Activated CD4-positive, alpha-beta memory T cell treated with anti-CD3 and anti-CD28 coated beads for 36 hours (primary cell): ENCODE measurements at regions of chr1 and their contacts with region 1.

Region 1: DNA sequence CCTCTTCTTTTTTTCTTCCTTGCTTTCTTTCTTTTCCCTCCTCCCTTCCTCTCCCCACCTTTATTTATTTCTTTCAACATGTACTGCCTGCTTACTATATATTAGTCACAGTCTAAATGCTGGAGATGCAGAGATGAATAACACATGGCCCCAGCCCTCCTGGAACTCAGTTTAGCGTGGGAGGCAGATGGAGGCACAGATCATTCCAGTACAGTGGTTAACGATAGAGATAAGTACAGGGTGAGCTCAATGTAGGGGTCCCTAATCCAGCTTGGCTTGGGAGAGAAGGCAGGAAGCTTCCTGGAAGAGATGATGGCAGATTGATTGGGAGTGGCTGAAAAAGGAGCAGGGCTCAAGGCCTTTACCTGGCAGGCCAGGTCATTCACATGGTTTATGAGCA is 55.6 kb upstream of the PPP2R5A start:
- DNase-seq: no peak
- H3K4me3 Mint-ChIP-seq: no peak overlapping the region
- H3K27ac Mint-ChIP-seq: no peak overlapping the region
- H3K4me1 Mint-ChIP-seq: peaks cover 30% of the 10 kb centered on the region
- H3K27me3 Mint-ChIP-seq: no peaks in the 10 kb centered on the region

Region 2: DNA sequence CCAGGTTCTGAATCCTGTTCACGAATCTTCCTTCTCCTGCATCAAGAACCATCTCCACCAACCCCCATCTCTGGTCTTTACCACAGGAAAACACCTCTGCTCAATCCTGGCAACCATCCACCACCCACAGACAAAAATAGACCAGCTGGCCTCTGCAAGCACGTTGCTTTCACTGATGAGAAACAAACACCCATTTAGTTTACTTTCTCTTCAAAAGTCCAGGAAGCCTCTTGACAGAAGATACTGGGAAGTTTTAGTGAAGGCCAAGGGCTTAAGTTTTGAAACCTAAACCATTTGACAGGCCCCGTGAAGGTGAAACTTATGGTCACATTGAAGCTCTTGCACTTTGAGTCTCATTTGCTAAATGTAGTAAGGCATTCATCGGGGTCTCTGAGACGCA is 67.0 kb before region 1 on chr1:
- CTCF ChIA-PET with region 1: interaction called, 3 read pairs
- POLR2A ChIA-PET with region 1: no interaction called
- intact Hi-C with region 1: loop called (anchors 5 kb)
- DNase-seq: peak; percentile 52
- H3K4me3 Mint-ChIP-seq: no peak overlapping the region
- H3K27ac Mint-ChIP-seq: peak overlapping the region; percentile 30
- H3K4me1 Mint-ChIP-seq: peaks cover 29% of the 10 kb centered on the region
- H3K27me3 Mint-ChIP-seq: no peaks in the 10 kb centered on the region

Region 3: DNA sequence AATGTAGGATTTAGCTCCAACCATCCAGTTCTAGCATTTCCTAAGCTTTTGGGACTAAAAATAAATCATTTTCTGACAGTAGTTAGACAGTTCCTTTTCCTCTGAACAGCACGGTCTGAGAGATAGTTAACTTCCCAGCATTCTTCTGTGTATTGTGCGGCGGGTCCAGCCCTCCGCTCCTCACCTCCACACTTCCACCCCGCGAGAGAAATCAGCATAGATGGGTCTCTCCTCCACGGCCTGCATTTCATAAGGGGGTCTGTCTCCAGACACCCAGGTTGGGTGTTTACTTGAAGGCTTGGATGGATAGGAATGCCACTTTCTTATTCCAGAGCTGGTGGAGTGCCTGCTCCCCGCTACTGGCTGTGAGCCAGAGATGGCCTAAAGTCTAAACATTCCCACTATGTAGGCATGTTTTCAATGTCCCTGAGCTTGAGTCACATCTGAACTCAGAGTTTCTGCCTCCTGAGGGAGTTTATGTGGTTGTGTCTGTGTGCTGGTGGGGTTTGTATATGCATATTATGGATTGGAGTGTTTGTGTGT is 17.6 kb after region 1 on chr1:
- CTCF ChIA-PET with region 1: no interaction called
- POLR2A ChIA-PET with region 1: no interaction called
- intact Hi-C with region 1: no loop called
- DNase-seq: no peak
- H3K4me3 Mint-ChIP-seq: no peak overlapping the region
- H3K27ac Mint-ChIP-seq: no peak overlapping the region
- H3K4me1 Mint-ChIP-seq: peaks cover 9% of the 10 kb centered on the region
- H3K27me3 Mint-ChIP-seq: no peaks in the 10 kb centered on the region

Region 4: GRCh38 chr1:212421165-212421564 is 191.5 kb after region 1 on chr1:
- CTCF ChIA-PET with region 1: no interaction called
- POLR2A ChIA-PET with region 1: no interaction called
- intact Hi-C with region 1: no loop called
- DNase-seq: no peak
- H3K4me3 Mint-ChIP-seq: no peak overlapping the region
- H3K27ac Mint-ChIP-seq: no peak overlapping the region
- H3K4me1 Mint-ChIP-seq: no peaks in the 10 kb centered on the region
- H3K27me3 Mint-ChIP-seq: peaks cover 5% of the 10 kb centered on the region

Region 5: DNA sequence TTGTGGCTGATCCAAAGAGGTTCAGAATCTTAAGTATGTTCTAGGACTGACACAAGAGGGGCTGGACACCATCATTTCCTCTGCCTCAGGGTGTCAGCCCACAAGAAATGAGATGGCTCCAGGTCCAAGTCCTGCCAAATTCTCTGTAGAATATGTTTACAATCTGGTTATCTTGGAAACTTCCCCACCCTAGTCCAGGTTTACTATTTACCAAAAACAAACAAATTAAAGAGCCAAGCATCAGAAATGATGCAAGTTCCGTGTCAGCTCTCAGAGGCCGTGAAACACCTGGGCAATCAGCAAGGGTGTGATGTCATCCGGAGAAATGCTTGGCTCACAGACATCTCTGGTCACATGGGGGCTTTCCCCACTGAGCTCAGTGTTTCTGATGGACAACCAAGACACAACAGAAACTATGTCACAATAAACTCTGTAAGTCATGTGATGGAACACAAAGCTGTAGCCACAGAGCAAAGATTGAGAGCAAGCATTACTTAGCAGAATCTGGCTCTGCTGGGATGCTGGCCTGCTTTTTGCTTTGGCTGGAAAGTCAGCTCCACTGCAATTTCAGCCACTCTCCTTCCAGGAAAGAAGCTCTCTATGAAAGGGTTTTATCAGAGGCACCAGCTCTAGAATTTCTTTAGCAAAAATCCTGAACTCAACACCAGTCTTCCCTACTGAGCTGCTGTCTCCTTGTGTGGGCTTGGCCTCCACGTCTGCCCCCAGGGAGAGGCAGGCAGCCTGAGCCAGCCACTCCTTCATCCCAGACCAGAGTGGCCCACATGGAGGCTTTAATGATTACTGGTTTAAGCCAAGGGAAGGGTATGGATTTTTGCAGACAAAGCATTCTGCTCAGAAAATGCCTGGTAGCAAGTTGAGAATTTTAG is 259.0 kb after region 1 on chr1:
- CTCF ChIA-PET with region 1: no interaction called
- POLR2A ChIA-PET with region 1: no interaction called
- intact Hi-C with region 1: no loop called
- DNase-seq: peak; percentile 69
- H3K4me3 Mint-ChIP-seq: no peak overlapping the region
- H3K27ac Mint-ChIP-seq: peak overlapping the region; percentile 36
- H3K4me1 Mint-ChIP-seq: peaks cover 7% of the 10 kb centered on the region
- H3K27me3 Mint-ChIP-seq: no peaks in the 10 kb centered on the region